Dorsolateral prefrontal cortex (tissue), 120 donors: ENCODE measurements at regions of chr2 and their contacts with region 1.

Region 1: DNA sequence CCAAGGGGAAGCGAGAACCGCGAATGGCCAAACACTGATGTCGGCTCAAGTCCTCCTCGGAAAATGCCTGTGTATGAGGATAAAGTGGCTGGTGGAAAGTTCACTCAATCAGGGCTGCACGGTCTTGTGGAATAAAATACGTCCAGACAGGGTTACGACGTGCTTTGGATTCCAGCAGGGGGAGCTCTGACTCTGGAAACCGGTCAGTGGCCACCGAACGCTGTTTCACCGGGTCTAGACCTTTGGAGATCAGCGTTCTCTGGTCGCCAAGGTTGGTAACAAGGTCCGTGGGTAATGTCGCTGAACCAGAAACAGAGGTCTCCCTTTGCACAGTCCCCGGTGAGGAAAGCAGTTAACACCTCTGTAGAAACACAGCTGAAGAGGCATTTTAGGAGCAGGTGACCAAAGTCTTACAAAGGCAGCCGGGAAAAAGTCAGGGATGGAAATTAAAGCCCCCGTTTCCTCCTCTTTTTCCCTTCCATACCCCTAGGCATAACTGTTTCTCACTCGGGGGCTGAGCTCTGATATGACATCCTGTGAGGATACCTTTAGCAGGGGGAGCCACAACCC is 47.8 kb downstream of the CDCA7 start:
- DNase-seq: peak; percentile 53 to 79 (median 70)
- H3K4me3 ChIP-seq: peak overlapping the region in 22 of 59 donors; percentile 2 to 42 (median 19)
- H3K27ac ChIP-seq: no peak overlapping the region
- H3K27me3 ChIP-seq: peaks cover 0 to 93% (median 59%) of the 10 kb centered on the region in 45 donors
- CTCF ChIP-seq: peak; percentile 71 to 92 (median 82)

Region 2: GRCh38 chr2:174039551-174040416 is 637.3 kb after region 1 on chr2:
- intact Hi-C with region 1: loop called in 1 of 2 experiments (anchors 10 kb)
- DNase-seq: peak; percentile 55 to 80 (median 70)
- H3K4me3 ChIP-seq: peak overlapping the region in 50 of 59 donors; percentile 1 to 59 (median 32)
- H3K27ac ChIP-seq: peak overlapping the region in 50 of 59 donors; percentile 3 to 88 (median 61)
- H3K27me3 ChIP-seq: peaks cover 0 to 3% (median 0%) of the 10 kb centered on the region in 45 donors
- CTCF ChIP-seq: peak; percentile 72 to 91 (median 84)

Region 3: GRCh38 chr2:174510583-174511189 is 1108.2 kb after region 1 on chr2:
- intact Hi-C with region 1: loop called in 1 of 2 experiments (anchors 10 kb)
- DNase-seq: no peak
- H3K4me3 ChIP-seq: no peak overlapping the region
- H3K27ac ChIP-seq: no peak overlapping the region
- H3K27me3 ChIP-seq: no peaks in the 10 kb centered on the region
- CTCF ChIP-seq: no peak